Upper lobe of right lung (tissue), 1 donor: ENCODE measurements at regions of chr9 and their contacts with region 1.

Region 1: DNA sequence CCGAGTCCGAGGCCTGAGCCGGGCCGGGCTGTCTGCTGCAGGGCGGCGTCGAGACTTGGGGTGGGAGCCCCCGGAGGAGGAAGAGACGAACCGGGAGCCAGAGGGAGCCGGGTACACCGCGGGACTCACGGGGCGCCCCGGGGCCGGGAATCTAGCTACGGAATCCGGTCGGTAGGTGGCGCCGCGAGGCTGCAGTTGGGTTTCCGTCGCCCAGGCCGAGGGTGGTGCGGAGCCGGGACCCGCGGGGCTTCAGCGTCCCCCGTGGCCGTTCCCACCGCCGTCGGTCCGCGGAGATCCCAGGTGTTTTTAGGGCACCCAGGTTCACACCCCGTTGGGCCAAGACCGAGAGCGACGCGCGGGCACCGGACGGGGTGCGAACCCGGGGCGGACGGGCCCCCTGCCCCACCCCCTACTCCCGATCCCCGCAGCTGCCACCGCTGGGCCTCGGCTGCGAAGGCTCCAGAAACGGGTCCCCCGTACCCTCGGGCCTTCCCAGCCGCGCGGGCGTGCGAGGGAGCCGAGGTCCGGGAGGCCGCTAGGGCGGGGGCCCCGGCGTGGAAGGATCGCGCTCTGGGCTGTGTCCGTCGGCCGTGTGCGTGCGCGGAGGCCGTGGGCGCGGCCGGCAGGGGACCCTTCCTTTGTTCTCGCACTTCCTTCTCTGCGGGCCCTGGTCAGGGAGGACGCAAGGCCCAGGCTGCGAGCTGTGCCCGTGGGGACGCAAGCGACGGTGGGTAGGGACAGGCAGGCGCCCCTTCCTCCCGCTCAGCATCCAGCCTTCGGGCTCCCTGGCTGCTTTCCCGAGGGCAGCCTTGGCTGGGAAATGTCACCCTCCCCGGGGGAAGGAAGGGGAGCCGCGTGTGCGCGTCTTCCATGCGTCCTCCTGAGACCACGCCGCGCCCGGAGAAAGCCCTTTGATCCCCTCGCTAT is 146.6 kb downstream of the GAPVD1 start:
- DNase-seq: peak; percentile 90
- ATAC-seq: peak; percentile 91
- H3K4me3 ChIP-seq: peak overlapping the region; percentile 73
- H3K27ac ChIP-seq: peak overlapping the region; percentile 42
- H3K4me1 ChIP-seq: peaks cover 4% of the 10 kb centered on the region
- H3K27me3 ChIP-seq: no peaks in the 10 kb centered on the region
- CTCF ChIP-seq: peak; percentile 91

Region 2: GRCh38 chr9:124934290-124934689 is 473.9 kb before region 1 on chr9:
- intact Hi-C with region 1: no loop called
- DNase-seq: no peak
- ATAC-seq: no peak
- H3K4me3 ChIP-seq: no peak overlapping the region
- H3K27ac ChIP-seq: no peak overlapping the region
- H3K4me1 ChIP-seq: no peaks in the 10 kb centered on the region
- H3K27me3 ChIP-seq: no peaks in the 10 kb centered on the region
- CTCF ChIP-seq: no peak

Region 3: GRCh38 chr9:125631391-125632085 is 223.3 kb after region 1 on chr9:
- intact Hi-C with region 1: loop called (anchors 10 kb)
- DNase-seq: no peak
- ATAC-seq: peak; percentile 83
- H3K4me3 ChIP-seq: no peak overlapping the region
- H3K27ac ChIP-seq: no peak overlapping the region
- H3K4me1 ChIP-seq: peaks cover 34% of the 10 kb centered on the region
- H3K27me3 ChIP-seq: no peaks in the 10 kb centered on the region
- CTCF ChIP-seq: peak; percentile 59

Region 4: GRCh38 chr9:126235336-126236243 is 827.4 kb after region 1 on chr9:
- intact Hi-C with region 1: loop called (anchors 10 kb)
- DNase-seq: no peak
- ATAC-seq: no peak
- H3K4me3 ChIP-seq: no peak overlapping the region
- H3K27ac ChIP-seq: no peak overlapping the region
- H3K4me1 ChIP-seq: no peaks in the 10 kb centered on the region
- H3K27me3 ChIP-seq: no peaks in the 10 kb centered on the region
- CTCF ChIP-seq: no peak

Region 5: GRCh38 chr9:126420643-126421577 is 1012.7 kb after region 1 on chr9:
- intact Hi-C with region 1: no loop called
- DNase-seq: no peak
- ATAC-seq: peak; percentile 65
- H3K4me3 ChIP-seq: no peak overlapping the region
- H3K27ac ChIP-seq: no peak overlapping the region
- H3K4me1 ChIP-seq: peaks cover 6% of the 10 kb centered on the region
- H3K27me3 ChIP-seq: no peaks in the 10 kb centered on the region
- CTCF ChIP-seq: no peak